HEK293T (cell line): ENCODE measurements at regions of chr18 and their contacts with region 1.

Region 1: DNA sequence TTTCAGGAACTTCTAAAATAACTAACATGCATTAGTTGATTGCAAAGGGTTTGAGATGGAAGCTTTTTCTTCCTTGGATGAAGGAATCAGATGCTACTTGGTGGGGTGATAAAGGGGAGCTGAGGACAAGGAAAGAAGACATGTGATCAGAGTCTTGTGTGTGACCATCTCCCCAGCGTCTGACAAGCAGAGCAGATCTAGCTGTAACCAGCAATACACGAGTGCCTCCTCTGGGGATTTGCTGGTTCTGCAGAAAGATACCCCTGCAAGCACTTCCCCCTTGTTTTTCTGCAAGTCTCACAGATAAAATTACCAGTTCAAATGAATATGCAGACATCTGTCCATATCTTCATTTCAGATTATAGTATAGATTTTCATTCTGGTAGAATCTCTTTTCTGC is 2.7 kb downstream of the CDH7 start:
- DNase-seq: peak; percentile 33

Region 2: DNA sequence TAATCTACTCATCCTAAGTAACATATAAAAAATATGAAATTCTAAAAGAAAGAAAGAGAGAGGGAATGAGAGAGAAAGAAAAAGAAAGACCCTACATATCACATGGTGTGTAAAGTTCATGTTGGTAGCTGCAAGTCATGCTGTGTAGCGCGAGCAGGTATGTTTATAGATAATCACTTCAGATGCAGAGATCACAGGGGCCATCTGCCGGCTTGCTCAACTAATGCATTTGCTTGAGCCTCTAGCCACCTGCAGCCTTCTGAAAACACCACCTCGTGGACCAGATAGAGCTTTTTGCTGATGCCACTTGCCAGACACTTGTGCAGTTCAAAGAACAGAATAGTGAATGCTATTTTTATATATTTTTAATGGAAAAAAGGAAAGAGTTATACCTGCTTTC is 34.9 kb after region 1 on chr18:
- CTCF ChIA-PET with region 1: interaction called, 10 read pairs
- POLR2A ChIA-PET with region 1: interaction called, 3 read pairs
- DNase-seq: peak; percentile 4

Region 3: GRCh38 chr18:65876290-65876689 is 122.8 kb after region 1 on chr18:
- CTCF ChIA-PET with region 1: no interaction called
- POLR2A ChIA-PET with region 1: no interaction called
- DNase-seq: no peak